AG04449 (cell line): ENCODE measurements at regions of chr4 and their contacts with region 1.

Region 1: GRCh38 chr4:147590249-147590920 is 26.8 kb upstream of the TMEM184C start:
- DNase-seq: no peak
- H3K4me3 ChIP-seq: no peak overlapping the region
- CTCF ChIP-seq: peak; percentile 55

Region 2: GRCh38 chr4:147019061-147019460 is 571.3 kb before region 1 on chr4:
- CTCF ChIA-PET with region 1: interaction called, 15 read pairs
- POLR2A ChIA-PET with region 1: no interaction called
- DNase-seq: no peak
- H3K4me3 ChIP-seq: no peak overlapping the region
- CTCF ChIP-seq: peak; percentile 71

Region 3: DNA sequence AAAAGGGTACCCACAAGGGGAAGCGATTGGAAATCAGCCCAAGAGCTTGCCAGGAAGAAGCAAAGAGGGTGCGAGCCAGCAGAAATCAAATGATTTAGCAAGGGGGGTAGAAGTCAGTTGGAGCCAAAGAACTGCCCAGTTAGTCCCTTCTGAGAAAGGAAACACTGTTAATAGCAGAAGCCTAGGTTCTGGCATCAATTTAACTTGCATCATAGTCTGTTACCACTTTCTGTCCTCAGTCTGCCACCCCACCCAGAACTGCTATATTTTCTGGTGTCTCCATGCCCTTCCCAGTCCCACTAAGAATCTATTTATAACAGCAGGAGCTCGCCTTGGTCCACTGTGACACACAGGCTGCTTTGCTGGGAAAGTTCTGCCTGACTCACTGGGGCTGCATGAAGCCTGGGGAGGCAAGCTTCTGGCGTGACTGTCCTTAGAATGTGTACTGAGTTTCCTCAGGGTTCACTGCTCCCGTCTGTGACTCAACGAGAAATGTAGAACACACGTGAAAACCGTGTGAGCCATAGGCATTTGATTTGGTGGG is 486.9 kb before region 1 on chr4:
- CTCF ChIA-PET with region 1: interaction called, 151 read pairs
- POLR2A ChIA-PET with region 1: no interaction called
- DNase-seq: peak; percentile 91
- H3K4me3 ChIP-seq: peak overlapping the region; percentile 23
- CTCF ChIP-seq: no peak

Region 4: DNA sequence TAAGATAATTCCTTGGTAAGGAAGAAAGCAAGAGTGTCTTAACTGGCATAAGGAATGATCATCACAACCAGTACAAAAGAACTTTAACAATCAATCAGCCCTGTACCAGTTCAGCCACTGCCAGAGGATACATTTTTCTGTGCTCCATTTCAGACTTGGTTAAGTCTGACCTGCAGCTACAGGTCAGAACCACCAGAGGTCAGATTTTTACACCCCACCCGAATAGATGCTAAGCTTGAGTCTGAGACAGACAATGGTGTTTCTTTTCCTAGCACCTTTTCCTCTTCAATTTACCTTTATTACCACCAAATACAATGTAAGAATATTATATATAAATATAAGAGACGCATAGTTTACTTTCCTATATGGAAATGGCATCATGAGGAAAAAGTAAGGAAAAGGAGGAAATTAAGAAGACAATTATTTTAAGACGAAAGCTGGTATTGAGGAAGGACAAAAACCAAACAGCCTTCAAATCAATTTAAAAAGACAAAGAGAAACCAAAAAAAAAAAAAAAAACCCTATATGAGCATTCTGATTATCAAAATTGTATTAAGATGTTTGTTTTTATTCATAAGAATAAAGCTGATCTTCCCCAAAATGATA is 429.4 kb before region 1 on chr4:
- CTCF ChIA-PET with region 1: interaction called, 114 read pairs
- POLR2A ChIA-PET with region 1: no interaction called
- DNase-seq: peak; percentile 19
- H3K4me3 ChIP-seq: no peak overlapping the region
- CTCF ChIP-seq: peak; percentile 76

Region 5: DNA sequence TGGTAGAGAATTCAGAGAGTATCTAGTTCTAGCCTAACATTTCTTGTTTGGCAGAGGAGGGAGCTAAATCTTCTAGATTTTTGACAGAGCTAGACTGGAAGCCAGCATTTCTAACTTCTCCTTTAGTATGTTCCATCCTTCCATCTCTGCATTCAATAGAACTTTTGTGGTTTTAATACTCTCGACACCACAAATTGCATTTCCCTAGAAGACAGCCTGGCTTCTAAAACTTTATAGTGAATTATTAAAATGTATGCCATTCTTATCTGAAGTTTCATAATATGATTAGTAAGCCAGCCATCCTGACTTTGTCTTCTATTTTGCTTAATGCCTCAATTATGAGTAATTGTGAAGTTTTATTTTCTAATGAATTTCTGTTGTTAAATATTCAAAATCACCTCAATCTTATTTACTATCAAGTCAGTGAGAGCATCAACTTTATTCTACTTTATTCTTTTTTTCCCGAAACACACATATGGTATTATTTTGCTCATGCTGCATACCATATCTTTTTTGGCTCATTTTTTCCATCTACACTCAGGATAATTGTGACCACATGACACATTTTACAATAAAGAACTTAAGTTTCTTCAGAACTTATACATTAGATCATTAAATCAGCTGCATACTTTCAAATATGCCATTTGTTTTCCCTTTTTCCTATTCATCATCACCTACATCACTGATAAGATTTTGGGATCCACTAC is 79.3 kb before region 1 on chr4:
- CTCF ChIA-PET with region 1: interaction called, 17 read pairs
- POLR2A ChIA-PET with region 1: no interaction called
- DNase-seq: no peak
- H3K4me3 ChIP-seq: no peak overlapping the region
- CTCF ChIP-seq: no peak

Region 6: DNA sequence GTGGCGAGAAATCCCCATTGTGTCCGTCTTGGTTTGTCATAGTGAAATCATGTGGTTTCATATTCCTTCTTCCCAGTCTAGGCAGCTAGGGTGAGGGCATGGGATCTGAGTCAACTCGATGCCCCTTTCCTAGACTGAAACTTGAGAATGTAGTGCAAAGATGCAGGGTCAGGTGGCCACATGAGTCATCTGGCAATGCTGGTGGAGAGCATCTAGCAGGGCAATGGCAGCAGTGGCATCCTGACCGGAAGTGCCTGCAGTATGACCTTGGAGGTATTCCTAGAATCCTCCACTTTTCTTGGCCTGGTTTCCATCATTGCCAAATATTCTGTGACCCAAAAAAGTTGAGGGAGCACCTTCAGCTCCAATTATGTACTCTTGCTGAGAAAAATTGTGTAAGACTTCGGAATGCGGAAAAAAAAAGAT is 12.3 kb before region 1 on chr4:
- CTCF ChIA-PET with region 1: interaction called, 14 read pairs
- POLR2A ChIA-PET with region 1: no interaction called
- DNase-seq: peak; percentile 84
- H3K4me3 ChIP-seq: no peak overlapping the region
- CTCF ChIP-seq: no peak

Region 7: DNA sequence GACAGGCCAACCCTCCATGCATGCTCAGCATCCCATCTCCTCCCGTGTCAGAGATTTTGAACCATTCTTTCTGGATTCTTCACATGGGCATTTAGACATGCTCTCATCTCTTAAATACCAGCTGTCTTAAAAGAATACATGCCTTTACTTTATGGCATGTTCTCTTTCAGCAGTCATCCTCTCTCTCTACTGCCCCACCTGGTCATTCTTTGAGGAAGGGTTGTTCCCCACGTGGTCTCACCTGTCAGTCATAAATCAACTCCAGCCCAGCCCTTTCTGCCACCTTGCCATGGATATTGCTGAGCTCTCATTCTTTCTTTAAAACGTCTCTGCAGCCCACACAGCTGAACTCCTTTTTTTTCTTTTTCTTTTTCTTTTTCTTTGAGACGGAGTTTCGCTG is 252.8 kb after region 1 on chr4:
- CTCF ChIA-PET with region 1: no interaction called
- POLR2A ChIA-PET with region 1: no interaction called
- DNase-seq: no peak
- H3K4me3 ChIP-seq: no peak overlapping the region
- CTCF ChIP-seq: no peak